PC-9 (cell line): ENCODE measurements at regions of chr18 and their contacts with region 1.

Region 1: GRCh38 chr18:9838144-9838877 is 47.5 kb upstream of the TXNDC2 start:
- DNase-seq: peak; percentile 91 to 94
- H3K4me3 ChIP-seq: no peak overlapping the region
- H3K27ac ChIP-seq: peak overlapping the region; percentile 39
- H3K4me1 ChIP-seq: peaks cover 42% of the 10 kb centered on the region
- H3K27me3 ChIP-seq: no peaks in the 10 kb centered on the region
- CTCF ChIP-seq: no peak

Region 2: GRCh38 chr18:10525371-10526210 is 687.3 kb after region 1 on chr18 and contains the start of gene NAPG:
- CTCF ChIA-PET with region 1: no interaction called
- POLR2A ChIA-PET with region 1: interaction called, 16 read pairs
- intact Hi-C with region 1: no loop called
- DNase-seq: peak; percentile 83 to 93
- H3K4me3 ChIP-seq: peak within 1 kb of the TSS; percentile 98
- H3K27ac ChIP-seq: peak within 1 kb of the TSS; percentile 76
- H3K4me1 ChIP-seq: peaks cover 27% of the 10 kb centered on the region
- H3K27me3 ChIP-seq: no peaks in the 10 kb centered on the region
- CTCF ChIP-seq: no peak
- total RNA-seq, gene NAPG: 28.1 and 31.0 TPM in 2 replicates